CD8-positive, alpha-beta memory T cell (primary cell): ENCODE measurements at regions of chr7 and their contacts with region 1.

Region 1: GRCh38 chr7:39574673-39575349 is 8.6 kb downstream of the YAE1 start:
- DNase-seq: no peak
- H3K4me3 ChIP-seq: no peak overlapping the region
- H3K4me3 Mint-ChIP-seq: no peak overlapping the region
- H3K27ac ChIP-seq: no peak overlapping the region
- H3K27ac Mint-ChIP-seq: peak overlapping the region in 3 of 8 donors; percentile 22 to 46 (median 37)
- H3K4me1 ChIP-seq: no peaks in the 10 kb centered on the region
- H3K4me1 Mint-ChIP-seq: peaks cover 0 to 6% (median 0%) of the 10 kb centered on the region in 3 donors
- H3K27me3 ChIP-seq: no peaks in the 10 kb centered on the region
- H3K27me3 Mint-ChIP-seq: no peaks in the 10 kb centered on the region

Region 2: GRCh38 chr7:39712751-39713150 is 137.9 kb after region 1 on chr7:
- CTCF ChIA-PET with region 1: no interaction called
- POLR2A ChIA-PET with region 1: interaction called, 17 read pairs
- DNase-seq: no peak
- H3K4me3 ChIP-seq: no peak overlapping the region
- H3K4me3 Mint-ChIP-seq: no peak overlapping the region
- H3K27ac ChIP-seq: no peak overlapping the region
- H3K27ac Mint-ChIP-seq: no peak overlapping the region
- H3K4me1 ChIP-seq: no peaks in the 10 kb centered on the region
- H3K4me1 Mint-ChIP-seq: peaks cover 0 to 5% (median 0%) of the 10 kb centered on the region in 3 donors
- H3K27me3 ChIP-seq: no peaks in the 10 kb centered on the region
- H3K27me3 Mint-ChIP-seq: peaks cover 5 to 10% of the 10 kb centered on the region in 2 donors